WTC11 (cell line): ENCODE measurements at regions of chr1 and their contacts with region 1.

Region 1: GRCh38 chr1:179002552-179003345 is 22.9 kb upstream of the FAM20B start:
- DNase-seq: peak; percentile 97
- ATAC-seq: peak; percentile 97
- H3K4me3 Mint-ChIP-seq: peak overlapping the region; percentile 51
- H3K27ac Mint-ChIP-seq: peak overlapping the region; percentile 71; the same call in 1 of the 2 replicates
- H3K4me1 Mint-ChIP-seq: peaks cover 10% of the 10 kb centered on the region
- H3K27me3 Mint-ChIP-seq: no peaks in the 10 kb centered on the region; the same call in 1 of the 2 replicates
- CTCF ChIP-seq: peak; percentile 94

Region 2: GRCh38 chr1:178532392-178532791 is 470.4 kb before region 1 on chr1:
- CTCF ChIA-PET with region 1: interaction called, 50 read pairs
- POLR2A ChIA-PET with region 1: no interaction called
- DNase-seq: peak; percentile 88
- ATAC-seq: peak; percentile 89
- H3K4me3 Mint-ChIP-seq: no peak overlapping the region
- H3K27ac Mint-ChIP-seq: no peak overlapping the region
- H3K4me1 Mint-ChIP-seq: 0 out of 2 replicates have a peak, but pooled peaks cover 2% of the 10 kb centered on the region
- H3K27me3 Mint-ChIP-seq: no peaks in the 10 kb centered on the region; the same call in 1 of the 2 replicates
- CTCF ChIP-seq: peak; percentile 96

Region 3: DNA sequence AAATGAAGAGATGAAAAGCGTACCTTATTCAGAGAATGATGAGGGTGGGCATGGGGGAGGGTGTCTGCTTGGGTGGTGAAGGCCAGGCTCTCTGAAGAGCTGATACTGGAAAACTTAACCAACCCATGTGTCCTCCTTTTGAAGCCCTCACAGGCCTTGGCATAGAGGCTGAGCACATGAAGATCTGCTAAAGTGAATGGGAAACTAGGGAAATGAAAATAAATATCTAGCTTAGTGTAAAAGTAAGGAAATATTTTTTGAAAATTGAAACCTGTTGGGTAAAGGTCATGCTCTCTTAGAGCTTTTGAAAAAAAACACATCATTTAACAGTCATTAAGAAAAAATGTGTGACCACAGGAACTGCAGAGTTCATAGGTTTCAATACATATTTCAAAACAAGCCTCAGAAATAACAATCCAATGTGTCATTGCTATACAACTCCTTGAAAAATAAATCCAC is 318.2 kb before region 1 on chr1:
- CTCF ChIA-PET with region 1: no interaction called
- POLR2A ChIA-PET with region 1: no interaction called
- DNase-seq: no peak
- ATAC-seq: no peak
- H3K4me3 Mint-ChIP-seq: no peak overlapping the region
- H3K27ac Mint-ChIP-seq: no peak overlapping the region
- H3K4me1 Mint-ChIP-seq: no peaks in the 10 kb centered on the region
- H3K27me3 Mint-ChIP-seq: no peaks in the 10 kb centered on the region
- CTCF ChIP-seq: no peak

Region 4: GRCh38 chr1:178725603-178726517 is 276.9 kb before region 1 on chr1:
- CTCF ChIA-PET with region 1: interaction called, 20 read pairs
- POLR2A ChIA-PET with region 1: interaction called, 6 read pairs
- DNase-seq: peak; percentile 62
- ATAC-seq: peak; percentile 80
- H3K4me3 Mint-ChIP-seq: peak overlapping the region; percentile 88
- H3K27ac Mint-ChIP-seq: peak overlapping the region; percentile 94
- H3K4me1 Mint-ChIP-seq: peaks cover 31% of the 10 kb centered on the region
- H3K27me3 Mint-ChIP-seq: no peaks in the 10 kb centered on the region
- CTCF ChIP-seq: no peak

Region 5: DNA sequence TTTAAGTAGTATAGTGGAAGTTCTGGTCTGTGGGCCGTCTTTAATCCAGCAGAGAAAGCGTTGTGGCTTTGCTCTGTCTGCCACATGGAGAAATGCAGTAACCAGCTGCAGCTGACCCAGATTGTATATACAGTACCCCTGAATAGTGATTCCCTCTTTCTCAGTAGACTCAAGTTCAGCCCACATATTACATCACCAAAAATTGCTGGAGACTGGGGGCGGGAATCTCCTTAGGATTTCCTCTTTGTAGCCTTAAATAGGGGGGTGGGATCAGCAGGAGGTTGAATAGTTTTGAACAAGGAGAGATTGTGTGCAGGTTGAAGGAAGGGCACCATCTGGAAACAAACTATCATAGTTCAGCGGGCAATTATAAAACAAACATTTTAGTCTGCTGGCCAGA is 131.8 kb before region 1 on chr1 and contains the start of gene ANGPTL1:
- CTCF ChIA-PET with region 1: interaction called, 17 read pairs
- POLR2A ChIA-PET with region 1: no interaction called
- DNase-seq: no peak
- ATAC-seq: peak; percentile 55
- H3K4me3 Mint-ChIP-seq: no peak within 1 kb of the TSS
- H3K27ac Mint-ChIP-seq: peak within 1 kb of the TSS; percentile 66
- H3K4me1 Mint-ChIP-seq: peaks cover 26% of the 10 kb centered on the region
- H3K27me3 Mint-ChIP-seq: no peaks in the 10 kb centered on the region
- CTCF ChIP-seq: no peak
- total RNA-seq, gene ANGPTL1: not detected in 3 replicates

Region 6: DNA sequence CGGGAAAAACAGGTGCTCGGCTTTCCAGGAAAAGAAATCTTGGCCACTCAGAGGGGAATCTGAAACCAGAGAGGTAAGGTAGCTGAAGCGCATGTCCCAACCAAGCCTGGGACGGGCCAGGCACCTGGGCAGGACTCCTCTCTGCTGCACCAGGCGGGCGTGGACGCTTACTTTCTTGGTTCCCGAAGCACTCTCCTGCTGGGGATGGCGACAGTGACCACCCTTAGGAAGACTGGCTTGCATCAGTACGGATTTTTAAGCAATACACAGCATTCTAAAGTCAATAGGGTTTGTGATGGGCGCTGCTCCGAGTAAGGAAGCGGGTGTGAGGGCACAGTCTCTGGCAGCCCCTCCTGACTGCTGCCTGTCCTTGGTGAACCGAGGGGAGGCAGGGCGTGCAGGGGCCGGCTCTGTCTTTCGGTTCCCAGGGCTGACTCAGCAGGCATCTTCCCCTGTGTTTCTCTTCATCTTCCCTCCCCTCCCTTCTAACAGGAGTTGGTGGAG is 56.9 kb before region 1 on chr1:
- CTCF ChIA-PET with region 1: interaction called, 13 read pairs
- POLR2A ChIA-PET with region 1: no interaction called
- DNase-seq: no peak
- ATAC-seq: peak; percentile 74
- H3K4me3 Mint-ChIP-seq: no peak overlapping the region
- H3K27ac Mint-ChIP-seq: no peak overlapping the region
- H3K4me1 Mint-ChIP-seq: peaks cover 19% of the 10 kb centered on the region
- H3K27me3 Mint-ChIP-seq: no peaks in the 10 kb centered on the region; the same call in 1 of the 2 replicates
- CTCF ChIP-seq: no peak

Region 7: GRCh38 chr1:179025975-179026812 is 23.4 kb after region 1 on chr1:
- CTCF ChIA-PET with region 1: interaction called, 19 read pairs
- POLR2A ChIA-PET with region 1: no interaction called
- DNase-seq: peak; percentile 71
- ATAC-seq: peak; percentile 76
- H3K4me3 Mint-ChIP-seq: peak overlapping the region; percentile 91
- H3K27ac Mint-ChIP-seq: peak overlapping the region; percentile 54; the same call in 1 of the 2 replicates
- H3K4me1 Mint-ChIP-seq: peaks cover 52% of the 10 kb centered on the region
- H3K27me3 Mint-ChIP-seq: peaks cover 6% of the 10 kb centered on the region
- CTCF ChIP-seq: no peak

Region 8: GRCh38 chr1:179190861-179191260 is 188.1 kb after region 1 on chr1:
- CTCF ChIA-PET with region 1: no interaction called
- POLR2A ChIA-PET with region 1: no interaction called
- DNase-seq: no peak
- ATAC-seq: no peak
- H3K4me3 Mint-ChIP-seq: no peak overlapping the region
- H3K27ac Mint-ChIP-seq: no peak overlapping the region
- H3K4me1 Mint-ChIP-seq: peaks cover 13% of the 10 kb centered on the region
- H3K27me3 Mint-ChIP-seq: no peaks in the 10 kb centered on the region
- CTCF ChIP-seq: no peak